ENCODE measurements at regions of chr9 and their contacts with region 1.

Region 1: GRCh38 chr9:136790927-136791641 is at the start of gene TMEM141:
- DNase-seq: peak; percentile 100
- ATAC-seq: peak; percentile 95 to 96
- total RNA-seq, gene TMEM141: 81.1 to 85.7 TPM

Region 2: GRCh38 chr9:136849038-136849959 is 58.2 kb after region 1 on chr9 and contains the start of gene PHPT1:
- intact Hi-C with region 1: loop called in 1 of 2 experiments (anchors 10 kb)
- DNase-seq: peak; percentile 99
- ATAC-seq: peak; percentile 85 to 87
- total RNA-seq, gene PHPT1: 184 to 189 TPM

Region 3: DNA sequence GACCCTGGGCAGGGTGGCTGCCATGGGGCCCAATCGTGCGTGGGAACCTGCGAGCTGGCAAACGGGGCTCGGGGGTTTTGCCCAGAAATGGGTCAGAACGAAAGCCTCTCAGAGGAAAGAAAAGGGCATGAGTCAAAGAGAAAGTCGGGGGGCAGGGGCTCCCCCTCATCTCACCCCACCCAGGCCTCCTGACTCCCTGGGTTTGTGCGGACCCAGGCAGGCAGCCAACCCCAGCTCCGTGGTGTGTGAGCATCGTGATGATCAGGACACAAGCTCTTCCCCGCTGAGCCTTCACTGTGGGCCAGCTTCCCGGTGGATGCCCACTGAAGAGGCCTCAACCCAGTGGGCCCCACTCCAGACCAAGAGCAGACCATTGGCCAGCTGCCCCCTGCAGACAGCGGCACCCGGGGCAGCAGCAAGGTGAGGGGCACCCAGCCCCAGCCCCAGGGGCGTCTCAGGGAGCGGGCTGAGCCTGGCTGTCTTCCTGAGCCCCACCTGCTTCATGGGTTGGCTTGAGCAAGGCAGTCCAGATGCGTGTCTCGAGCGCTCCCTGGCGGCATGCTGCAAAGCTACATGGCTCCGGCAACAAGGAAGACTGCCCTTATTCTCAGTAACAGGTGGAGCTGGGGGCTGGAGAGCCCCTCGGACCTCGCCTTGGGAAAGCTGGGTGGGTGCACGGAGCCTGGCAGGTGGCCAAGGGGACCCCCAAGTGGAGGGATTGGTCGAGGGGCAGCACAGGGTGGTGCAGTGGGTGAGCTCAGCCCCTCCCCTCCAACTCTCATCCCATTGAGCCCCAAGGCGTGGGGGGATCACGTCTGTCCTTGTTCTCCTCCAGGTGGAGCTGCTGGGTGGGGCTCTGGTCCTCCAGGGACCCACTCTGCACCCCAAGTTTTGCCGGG is 244.0 kb after region 1 on chr9:
- intact Hi-C with region 1: loop called (anchors 2 to 5 kb)
- DNase-seq: peak; percentile 78
- ATAC-seq: peak; percentile 72 to 82

Region 4: GRCh38 chr9:137067860-137068538 is 276.9 kb after region 1 on chr9:
- intact Hi-C with region 1: loop called in 1 of 2 experiments (anchors 10 kb)
- DNase-seq: peak; percentile 74
- ATAC-seq: peak; percentile 37 to 42

Region 5: GRCh38 chr9:137254624-137255447 is 463.8 kb after region 1 on chr9 and contains the start of gene NELFB:
- intact Hi-C with region 1: no loop called
- DNase-seq: peak; percentile 94
- ATAC-seq: peak; percentile 90 to 94
- total RNA-seq, gene NELFB: 35.1 to 38.1 TPM

Measured in left cardiac atrium (tissue), 4 donors.